ENCODE measurements at regions of chr9 and their contacts with region 1.

Region 1: DNA sequence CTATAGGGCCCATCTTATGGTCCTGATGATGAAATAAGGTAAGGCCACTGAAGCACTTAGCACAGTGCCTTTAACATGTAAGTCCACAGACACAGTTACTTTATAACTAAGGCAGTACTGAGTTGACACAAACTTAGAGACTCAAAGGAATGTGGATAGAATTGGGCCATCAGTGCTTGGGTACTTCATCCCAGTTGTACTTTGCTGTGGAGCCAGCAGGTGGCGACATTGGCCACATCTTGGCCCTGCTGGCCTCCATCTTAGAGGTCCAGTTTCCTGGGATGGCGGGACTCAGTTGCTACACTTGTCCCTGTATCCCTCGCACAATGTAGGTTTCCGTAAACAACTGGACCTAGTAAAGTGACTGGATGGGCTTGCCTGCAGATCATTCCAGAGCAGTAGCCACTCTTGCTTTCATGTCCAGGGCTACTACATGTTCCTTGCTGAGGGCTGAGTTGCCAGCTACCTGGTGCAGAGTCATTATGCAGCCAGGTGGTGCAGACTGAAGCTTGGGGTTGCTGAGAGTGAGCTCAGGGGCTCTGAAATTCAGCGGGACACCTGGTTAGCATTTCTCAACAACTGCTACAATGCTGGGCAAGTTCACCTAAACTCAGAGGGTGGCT is 10.6 kb downstream of the MTAP start:
- DNase-seq: peak; percentile 66 to 83 (median 81)
- ATAC-seq: peak; percentile 93
- H3K4me3 ChIP-seq: no peak overlapping the region
- H3K4me1 ChIP-seq: no peaks in the 10 kb centered on the region
- CTCF ChIP-seq: peak; percentile 75

Region 2: GRCh38 chr9:21720758-21721157 is 92.3 kb before region 1 on chr9:
- intact Hi-C with region 1: no loop called
- DNase-seq: no peak
- ATAC-seq: no peak
- H3K4me3 ChIP-seq: no peak overlapping the region
- H3K4me1 ChIP-seq: no peaks in the 10 kb centered on the region
- CTCF ChIP-seq: no peak

Region 3: GRCh38 chr9:22238809-22239684 is 426.0 kb after region 1 on chr9:
- intact Hi-C with region 1: loop called (anchors 5 to 10 kb)
- DNase-seq: peak in 1 of 3 donors; percentile 14
- ATAC-seq: peak; percentile 58
- H3K4me3 ChIP-seq: no peak overlapping the region
- H3K4me1 ChIP-seq: peaks cover 3% of the 10 kb centered on the region
- CTCF ChIP-seq: peak; percentile 34

Region 4: GRCh38 chr9:22244141-22245011 is 431.3 kb after region 1 on chr9:
- intact Hi-C with region 1: loop called (anchors 5 to 10 kb)
- DNase-seq: peak in 2 of 3 donors; percentile 34 to 68
- ATAC-seq: peak; percentile 68
- H3K4me3 ChIP-seq: no peak overlapping the region
- H3K4me1 ChIP-seq: no peaks in the 10 kb centered on the region
- CTCF ChIP-seq: no peak

Region 5: GRCh38 chr9:22452415-22453010 is 639.5 kb after region 1 on chr9:
- intact Hi-C with region 1: loop called (anchors 10 kb)
- DNase-seq: peak in 2 of 3 donors; percentile 43 to 70
- ATAC-seq: peak; percentile 56
- H3K4me3 ChIP-seq: no peak overlapping the region
- H3K4me1 ChIP-seq: no peaks in the 10 kb centered on the region
- CTCF ChIP-seq: peak; percentile 32

Measured in mucosa of descending colon (tissue), 3 donors.